CD8-positive, alpha-beta T cell (primary cell): ENCODE measurements at regions of chr1 and their contacts with region 1.

Region 1: GRCh38 chr1:27392096-27392777 is at the start of gene GPR3:
- DNase-seq: peak; percentile 79 to 96 (median 92)
- ATAC-seq: peak; percentile 89
- H3K4me3 ChIP-seq: peak within 1 kb of the TSS; percentile 31 to 65
- H3K4me3 Mint-ChIP-seq: peak within 1 kb of the TSS; percentile 83
- H3K27ac ChIP-seq: peak within 1 kb of the TSS in 1 of 2 experiments; percentile 32
- H3K27ac Mint-ChIP-seq: peak within 1 kb of the TSS; percentile 64
- H3K4me1 ChIP-seq: peaks cover 27% of the 10 kb centered on the region
- H3K4me1 Mint-ChIP-seq: peaks cover 12% of the 10 kb centered on the region
- H3K27me3 ChIP-seq: no peaks in the 10 kb centered on the region
- H3K27me3 Mint-ChIP-seq: no peaks in the 10 kb centered on the region
- CTCF ChIP-seq: peak; percentile 35
- total RNA-seq, gene GPR3: 1.1 TPM in 1 of 2 experiments, not detected in the other

Region 2: DNA sequence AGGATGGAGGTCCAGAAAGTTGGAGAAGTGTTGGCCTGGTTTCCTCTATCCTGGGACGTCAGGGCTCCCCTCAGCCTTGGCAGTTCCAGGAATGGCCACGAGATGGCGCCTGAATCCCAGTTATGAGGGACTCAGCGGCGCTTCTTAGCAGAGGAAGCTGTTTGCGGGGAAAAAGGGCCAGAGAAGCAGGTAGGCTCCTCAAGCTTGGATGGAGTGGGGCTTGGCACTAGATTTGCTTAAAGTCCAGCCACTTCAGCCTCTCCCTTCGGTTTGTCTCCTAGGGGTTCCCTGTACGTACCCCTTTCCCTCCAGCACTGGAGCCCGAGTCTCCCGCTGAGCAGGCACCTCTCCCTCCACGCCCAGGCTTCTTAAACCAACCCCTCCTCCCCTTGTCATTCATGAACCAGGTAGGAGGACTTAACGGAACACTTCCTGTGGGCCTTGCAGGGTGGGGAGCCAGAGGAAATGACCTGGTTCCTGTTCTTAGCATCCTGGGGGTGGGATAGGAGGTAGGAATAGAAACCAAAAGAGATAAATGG is 347.6 kb before region 1 on chr1:
- CTCF ChIA-PET with region 1: interaction called, 8 read pairs
- POLR2A ChIA-PET with region 1: no interaction called
- intact Hi-C with region 1: loop called (anchors 2 to 5 kb)
- DNase-seq: peak; percentile 80 to 95 (median 87)
- ATAC-seq: peak; percentile 92
- H3K4me3 ChIP-seq: peak overlapping the region; percentile 11 to 36
- H3K4me3 Mint-ChIP-seq: peak overlapping the region; percentile 55
- H3K27ac ChIP-seq: no peak overlapping the region
- H3K27ac Mint-ChIP-seq: no peak overlapping the region
- H3K4me1 ChIP-seq: peaks cover 13% of the 10 kb centered on the region
- H3K4me1 Mint-ChIP-seq: peaks cover 21% of the 10 kb centered on the region
- H3K27me3 ChIP-seq: peaks cover 0 to 6% of the 10 kb centered on the region in 2 experiments
- H3K27me3 Mint-ChIP-seq: no peaks in the 10 kb centered on the region
- CTCF ChIP-seq: peak; percentile 84

Region 3: GRCh38 chr1:27300341-27301051 is 91.7 kb before region 1 on chr1:
- CTCF ChIA-PET with region 1: interaction called, 406 read pairs
- POLR2A ChIA-PET with region 1: interaction called, 3 read pairs
- intact Hi-C with region 1: loop called (anchors 1 kb)
- DNase-seq: peak; percentile 60 to 90 (median 74)
- ATAC-seq: peak; percentile 99
- H3K4me3 ChIP-seq: no peak overlapping the region
- H3K4me3 Mint-ChIP-seq: no peak overlapping the region
- H3K27ac ChIP-seq: no peak overlapping the region
- H3K27ac Mint-ChIP-seq: no peak overlapping the region
- H3K4me1 ChIP-seq: no peaks in the 10 kb centered on the region
- H3K4me1 Mint-ChIP-seq: peaks cover 6% of the 10 kb centered on the region
- H3K27me3 ChIP-seq: no peaks in the 10 kb centered on the region
- H3K27me3 Mint-ChIP-seq: no peaks in the 10 kb centered on the region
- CTCF ChIP-seq: peak; percentile 84

Region 4: GRCh38 chr1:27332536-27333281 is 59.5 kb before region 1 on chr1:
- CTCF ChIA-PET with region 1: interaction called, 120 read pairs
- POLR2A ChIA-PET with region 1: interaction called, 4 read pairs
- intact Hi-C with region 1: loop called (anchors 1 kb)
- DNase-seq: peak; percentile 37 to 78 (median 64)
- ATAC-seq: peak; percentile 96
- H3K4me3 ChIP-seq: no peak overlapping the region
- H3K4me3 Mint-ChIP-seq: no peak overlapping the region
- H3K27ac ChIP-seq: no peak overlapping the region
- H3K27ac Mint-ChIP-seq: peak overlapping the region; percentile 27
- H3K4me1 ChIP-seq: peaks cover 13% of the 10 kb centered on the region
- H3K4me1 Mint-ChIP-seq: peaks cover 38% of the 10 kb centered on the region
- H3K27me3 ChIP-seq: no peaks in the 10 kb centered on the region
- H3K27me3 Mint-ChIP-seq: no peaks in the 10 kb centered on the region
- CTCF ChIP-seq: peak; percentile 86

Region 5: DNA sequence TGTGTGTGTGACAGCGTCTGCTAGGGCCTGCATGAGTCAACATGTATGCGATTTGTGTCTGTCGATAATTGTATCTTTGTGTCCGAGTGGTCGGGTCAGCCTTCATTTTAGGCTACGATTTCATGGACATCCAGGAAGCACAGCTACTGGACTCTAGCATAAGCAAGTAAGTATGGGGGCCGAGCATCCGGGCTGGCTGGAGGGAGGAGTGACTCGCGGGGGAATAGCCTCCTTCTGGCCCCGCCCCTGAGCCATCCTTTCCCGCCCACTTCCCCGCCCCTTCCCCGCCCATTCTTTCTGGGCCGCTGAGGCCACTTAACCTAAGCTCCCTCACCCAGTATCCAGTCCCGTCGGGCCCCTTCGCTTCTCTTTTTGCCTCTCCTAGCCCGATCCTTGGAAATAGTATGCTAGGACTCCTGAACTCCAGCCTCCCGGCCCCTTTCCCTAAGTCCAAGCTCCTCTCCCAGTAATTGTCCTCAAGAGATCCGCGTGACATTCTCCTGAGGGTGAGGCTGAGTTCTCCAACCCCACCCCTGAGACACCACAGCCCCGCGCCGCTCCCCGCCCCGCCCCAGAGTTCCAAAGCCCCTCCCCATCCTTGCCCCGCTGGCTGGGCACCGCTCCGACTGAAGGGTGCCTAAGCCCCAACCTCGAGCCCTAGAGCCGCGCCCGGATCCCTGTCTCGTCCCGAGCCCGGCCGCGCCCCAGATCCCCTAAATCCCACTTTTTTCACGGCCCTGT is 26.7 kb before region 1 on chr1:
- CTCF ChIA-PET with region 1: interaction called, 140 read pairs
- POLR2A ChIA-PET with region 1: no interaction called
- intact Hi-C with region 1: no loop called
- DNase-seq: peak; percentile 62 to 85 (median 78)
- ATAC-seq: peak; percentile 78
- H3K4me3 ChIP-seq: peak overlapping the region; percentile 66 to 73
- H3K4me3 Mint-ChIP-seq: peak overlapping the region; percentile 86
- H3K27ac ChIP-seq: no peak overlapping the region
- H3K27ac Mint-ChIP-seq: no peak overlapping the region
- H3K4me1 ChIP-seq: peaks cover 17% of the 10 kb centered on the region
- H3K4me1 Mint-ChIP-seq: peaks cover 34% of the 10 kb centered on the region
- H3K27me3 ChIP-seq: no peaks in the 10 kb centered on the region
- H3K27me3 Mint-ChIP-seq: no peaks in the 10 kb centered on the region
- CTCF ChIP-seq: no peak

Region 6: DNA sequence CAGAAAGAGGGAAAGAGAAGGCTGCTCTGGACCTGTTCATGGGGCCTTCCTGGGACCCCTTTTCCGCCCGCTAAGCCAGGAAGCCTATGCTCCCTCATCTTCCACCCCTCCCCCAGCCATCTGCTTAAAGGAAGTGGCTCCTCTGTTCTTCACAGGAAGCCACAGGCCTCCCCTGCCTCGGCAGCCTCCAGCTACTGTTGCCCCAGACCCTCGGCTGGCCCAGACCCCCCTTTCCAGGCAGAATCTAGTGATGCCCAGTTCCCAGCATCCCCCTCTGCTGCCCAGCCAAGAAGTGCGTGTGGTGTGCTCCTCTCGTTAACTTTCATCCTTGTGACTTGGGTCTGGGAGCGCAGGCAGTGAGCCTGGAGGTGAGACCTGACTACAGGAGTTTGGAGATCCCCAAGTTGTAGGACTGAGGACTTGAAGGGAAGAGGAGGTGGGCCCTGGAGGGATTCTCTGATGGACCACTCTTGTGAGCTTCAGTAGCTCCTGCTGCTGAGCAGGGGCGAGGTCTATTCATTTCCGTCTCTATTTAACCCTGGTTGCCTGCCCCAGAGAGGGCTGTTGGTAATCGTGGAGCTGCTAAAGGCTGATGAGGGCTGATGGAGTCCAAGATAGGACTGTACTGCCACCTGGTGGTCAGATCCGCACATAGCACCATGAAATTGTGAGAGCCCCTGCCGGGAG is 270.6 kb after region 1 on chr1:
- CTCF ChIA-PET with region 1: interaction called, 6 read pairs
- POLR2A ChIA-PET with region 1: no interaction called
- intact Hi-C with region 1: loop called (anchors 2 kb)
- DNase-seq: peak; percentile 82 to 96 (median 90)
- ATAC-seq: peak; percentile 72
- H3K4me3 ChIP-seq: peak overlapping the region; percentile 50 to 59
- H3K4me3 Mint-ChIP-seq: peak overlapping the region; percentile 81
- H3K27ac ChIP-seq: peak overlapping the region; percentile 87 to 95
- H3K27ac Mint-ChIP-seq: peak overlapping the region; percentile 97
- H3K4me1 ChIP-seq: peaks cover 46% of the 10 kb centered on the region
- H3K4me1 Mint-ChIP-seq: peaks cover 46% of the 10 kb centered on the region
- H3K27me3 ChIP-seq: no peaks in the 10 kb centered on the region
- H3K27me3 Mint-ChIP-seq: no peaks in the 10 kb centered on the region
- CTCF ChIP-seq: peak; percentile 74